CD8-positive, alpha-beta T cell (primary cell): ENCODE measurements at regions of chr12 and their contacts with region 1.

Region 1: GRCh38 chr12:74689071-74689655 is 151.5 kb downstream of the ATXN7L3B start:
- DNase-seq: peak in 2 of 9 experiments; percentile 44 to 57
- ATAC-seq: no peak
- H3K4me3 ChIP-seq: no peak overlapping the region
- H3K4me3 Mint-ChIP-seq: no peak overlapping the region
- H3K27ac ChIP-seq: no peak overlapping the region
- H3K27ac Mint-ChIP-seq: no peak overlapping the region
- H3K4me1 ChIP-seq: no peaks in the 10 kb centered on the region
- H3K4me1 Mint-ChIP-seq: no peaks in the 10 kb centered on the region
- H3K27me3 ChIP-seq: no peaks in the 10 kb centered on the region
- H3K27me3 Mint-ChIP-seq: no peaks in the 10 kb centered on the region
- CTCF ChIP-seq: peak; percentile 56

Region 2: GRCh38 chr12:75058228-75058627 is 369.1 kb after region 1 on chr12:
- CTCF ChIA-PET with region 1: interaction called, 3 read pairs
- POLR2A ChIA-PET with region 1: no interaction called
- intact Hi-C with region 1: loop called (anchors 5 to 10 kb)
- DNase-seq: peak in 1 of 9 experiments; percentile 8
- ATAC-seq: no peak
- H3K4me3 ChIP-seq: no peak overlapping the region
- H3K4me3 Mint-ChIP-seq: no peak overlapping the region
- H3K27ac ChIP-seq: no peak overlapping the region
- H3K27ac Mint-ChIP-seq: no peak overlapping the region
- H3K4me1 ChIP-seq: no peaks in the 10 kb centered on the region
- H3K4me1 Mint-ChIP-seq: no peaks in the 10 kb centered on the region
- H3K27me3 ChIP-seq: no peaks in the 10 kb centered on the region
- H3K27me3 Mint-ChIP-seq: no peaks in the 10 kb centered on the region
- CTCF ChIP-seq: no peak

Region 3: DNA sequence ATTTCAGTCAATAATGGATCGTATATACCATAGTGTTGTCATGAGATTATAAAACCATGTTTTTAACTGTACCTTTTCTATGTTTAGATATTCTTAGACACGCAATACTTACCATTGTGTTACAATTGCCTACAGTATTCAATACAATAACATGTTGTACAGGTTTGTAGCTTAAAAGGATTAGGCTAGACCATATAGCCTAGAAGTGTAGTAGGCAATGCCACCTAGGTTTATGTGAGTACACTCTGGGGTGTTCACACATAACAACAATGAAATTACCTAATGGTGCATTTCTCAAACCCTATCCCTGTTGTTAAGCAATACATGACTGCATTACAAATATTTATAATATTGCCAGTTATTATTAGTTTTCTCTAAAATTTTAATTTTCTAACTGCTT is 376.3 kb after region 1 on chr12:
- CTCF ChIA-PET with region 1: interaction called, 3 read pairs
- POLR2A ChIA-PET with region 1: no interaction called
- intact Hi-C with region 1: loop called in 1 of 2 experiments (anchors 10 kb)
- DNase-seq: no peak
- ATAC-seq: no peak
- H3K4me3 ChIP-seq: no peak overlapping the region
- H3K4me3 Mint-ChIP-seq: no peak overlapping the region
- H3K27ac ChIP-seq: no peak overlapping the region
- H3K27ac Mint-ChIP-seq: no peak overlapping the region
- H3K4me1 ChIP-seq: no peaks in the 10 kb centered on the region
- H3K4me1 Mint-ChIP-seq: no peaks in the 10 kb centered on the region
- H3K27me3 ChIP-seq: no peaks in the 10 kb centered on the region
- H3K27me3 Mint-ChIP-seq: no peaks in the 10 kb centered on the region
- CTCF ChIP-seq: no peak

Region 4: DNA sequence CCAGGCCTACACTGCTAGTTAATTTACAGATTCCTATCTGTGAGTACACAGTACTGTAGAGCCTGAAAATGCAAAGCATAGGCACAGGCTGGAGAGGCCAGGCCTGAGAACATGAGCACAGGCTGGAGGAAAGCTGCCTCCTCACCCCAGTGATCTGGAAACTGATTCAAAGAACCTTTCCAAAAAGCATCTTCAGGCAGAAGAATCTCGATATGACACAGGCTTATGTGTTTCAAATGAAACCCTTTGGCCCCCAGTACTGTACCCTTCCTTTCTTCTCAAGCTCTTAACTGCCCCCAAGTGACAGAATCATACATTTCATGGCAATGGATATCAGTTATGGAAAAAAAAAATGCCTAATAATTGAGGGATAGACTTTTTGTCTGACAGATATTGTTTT is 398.5 kb after region 1 on chr12:
- CTCF ChIA-PET with region 1: interaction called, 4 read pairs
- POLR2A ChIA-PET with region 1: no interaction called
- intact Hi-C with region 1: loop called in 1 of 2 experiments (anchors 5 kb)
- DNase-seq: peak in 2 of 9 experiments; percentile 4 to 16
- ATAC-seq: no peak
- H3K4me3 ChIP-seq: no peak overlapping the region
- H3K4me3 Mint-ChIP-seq: no peak overlapping the region
- H3K27ac ChIP-seq: no peak overlapping the region
- H3K27ac Mint-ChIP-seq: no peak overlapping the region
- H3K4me1 ChIP-seq: no peaks in the 10 kb centered on the region
- H3K4me1 Mint-ChIP-seq: no peaks in the 10 kb centered on the region
- H3K27me3 ChIP-seq: no peaks in the 10 kb centered on the region
- H3K27me3 Mint-ChIP-seq: peaks cover 2% of the 10 kb centered on the region
- CTCF ChIP-seq: no peak

Region 5: DNA sequence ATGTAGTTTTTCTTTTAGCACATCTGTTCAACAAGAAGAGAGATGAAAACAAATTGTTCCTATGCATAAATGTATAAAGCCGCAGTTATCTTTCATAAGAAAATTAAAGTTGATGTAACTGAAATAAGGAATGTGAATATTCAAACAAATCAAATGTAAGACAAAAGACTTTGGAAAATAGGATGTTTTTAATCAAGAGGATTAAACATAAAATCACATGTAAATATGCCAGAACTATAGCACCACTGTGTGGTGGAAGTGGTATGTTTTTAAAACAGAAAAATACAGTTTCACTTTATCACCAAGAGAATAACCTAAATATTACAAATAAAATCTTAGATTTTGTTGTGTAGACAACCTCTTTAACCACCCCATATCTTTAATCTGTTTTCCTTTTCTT is 600.6 kb after region 1 on chr12:
- CTCF ChIA-PET with region 1: no interaction called
- POLR2A ChIA-PET with region 1: no interaction called
- intact Hi-C with region 1: loop called in 1 of 2 experiments (anchors 2 kb)
- DNase-seq: peak in 1 of 9 experiments; percentile 22
- ATAC-seq: no peak
- H3K4me3 ChIP-seq: no peak overlapping the region
- H3K4me3 Mint-ChIP-seq: no peak overlapping the region
- H3K27ac ChIP-seq: no peak overlapping the region
- H3K27ac Mint-ChIP-seq: no peak overlapping the region
- H3K4me1 ChIP-seq: no peaks in the 10 kb centered on the region
- H3K4me1 Mint-ChIP-seq: no peaks in the 10 kb centered on the region
- H3K27me3 ChIP-seq: no peaks in the 10 kb centered on the region
- H3K27me3 Mint-ChIP-seq: no peaks in the 10 kb centered on the region
- CTCF ChIP-seq: no peak

Region 6: GRCh38 chr12:76037130-76038103 is 1348.3 kb after region 1 on chr12:
- CTCF ChIA-PET with region 1: no interaction called
- POLR2A ChIA-PET with region 1: no interaction called
- intact Hi-C with region 1: loop called in 1 of 2 experiments (anchors 2 kb)
- DNase-seq: peak in 4 of 9 experiments; percentile 27 to 82 (median 52)
- ATAC-seq: peak; percentile 91
- H3K4me3 ChIP-seq: no peak overlapping the region
- H3K4me3 Mint-ChIP-seq: no peak overlapping the region
- H3K27ac ChIP-seq: no peak overlapping the region
- H3K27ac Mint-ChIP-seq: no peak overlapping the region
- H3K4me1 ChIP-seq: peaks cover 3% of the 10 kb centered on the region
- H3K4me1 Mint-ChIP-seq: peaks cover 13% of the 10 kb centered on the region
- H3K27me3 ChIP-seq: no peaks in the 10 kb centered on the region
- H3K27me3 Mint-ChIP-seq: no peaks in the 10 kb centered on the region
- CTCF ChIP-seq: peak; percentile 79

Region 7: DNA sequence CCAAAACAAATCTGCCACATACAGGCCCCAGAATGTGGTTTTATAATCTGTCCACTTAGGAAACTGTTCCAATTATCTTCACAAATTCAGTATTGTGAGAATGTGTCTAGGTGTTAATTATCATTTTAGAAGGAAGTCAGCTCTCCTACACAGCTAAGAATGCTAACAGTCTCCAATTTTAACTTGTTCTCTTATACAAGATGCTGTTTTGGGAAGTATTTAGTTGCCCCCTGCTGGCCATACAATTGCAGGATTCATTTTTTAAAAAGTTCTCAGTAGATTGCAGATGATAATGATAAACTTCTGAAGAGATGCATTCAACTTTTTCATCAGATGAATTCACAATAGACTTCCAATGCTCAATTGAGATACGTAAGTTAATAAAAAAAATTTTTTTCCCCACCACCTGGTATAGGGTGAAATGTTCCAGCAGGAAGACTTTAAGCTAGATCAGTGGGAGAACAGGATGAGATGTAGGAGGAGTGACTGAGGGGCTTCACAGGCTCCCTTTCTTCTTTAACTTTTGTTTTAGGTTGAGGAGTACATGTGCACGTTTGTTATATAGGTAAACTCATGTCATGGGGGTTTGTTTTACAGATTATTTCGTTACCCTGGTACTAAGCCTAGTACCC is 1897.7 kb after region 1 on chr12:
- CTCF ChIA-PET with region 1: no interaction called
- POLR2A ChIA-PET with region 1: no interaction called
- intact Hi-C with region 1: loop called in 1 of 2 experiments (anchors 2 kb)
- DNase-seq: peak in 8 of 9 experiments; percentile 2 to 74 (median 44)
- ATAC-seq: peak; percentile 68
- H3K4me3 ChIP-seq: no peak overlapping the region
- H3K4me3 Mint-ChIP-seq: no peak overlapping the region
- H3K27ac ChIP-seq: no peak overlapping the region
- H3K27ac Mint-ChIP-seq: no peak overlapping the region
- H3K4me1 ChIP-seq: no peaks in the 10 kb centered on the region
- H3K4me1 Mint-ChIP-seq: peaks cover 2% of the 10 kb centered on the region
- H3K27me3 ChIP-seq: no peaks in the 10 kb centered on the region
- H3K27me3 Mint-ChIP-seq: no peaks in the 10 kb centered on the region
- CTCF ChIP-seq: peak; percentile 93